ENCODE measurements at regions of chr17 and their contacts with region 1.

Region 1: GRCh38 chr17:67376737-67377487 is at the start of gene PITPNC1:
- DNase-seq: peak; percentile 80 to 81
- H3K4me3 ChIP-seq: peak within 1 kb of the TSS; percentile 74 to 90
- H3K27ac ChIP-seq: peak within 1 kb of the TSS; percentile 91 to 96
- H3K4me1 ChIP-seq: no peaks in the 10 kb centered on the region
- H3K27me3 ChIP-seq: no peaks in the 10 kb centered on the region
- CTCF ChIP-seq: peak in 2 of 4 experiments; percentile 15 to 20
- POLR2A ChIP-seq: peak; percentile 67 to 83
- total RNA-seq, gene PITPNC1: 4.1 to 45.1 (median 8.7) TPM

Region 2: DNA sequence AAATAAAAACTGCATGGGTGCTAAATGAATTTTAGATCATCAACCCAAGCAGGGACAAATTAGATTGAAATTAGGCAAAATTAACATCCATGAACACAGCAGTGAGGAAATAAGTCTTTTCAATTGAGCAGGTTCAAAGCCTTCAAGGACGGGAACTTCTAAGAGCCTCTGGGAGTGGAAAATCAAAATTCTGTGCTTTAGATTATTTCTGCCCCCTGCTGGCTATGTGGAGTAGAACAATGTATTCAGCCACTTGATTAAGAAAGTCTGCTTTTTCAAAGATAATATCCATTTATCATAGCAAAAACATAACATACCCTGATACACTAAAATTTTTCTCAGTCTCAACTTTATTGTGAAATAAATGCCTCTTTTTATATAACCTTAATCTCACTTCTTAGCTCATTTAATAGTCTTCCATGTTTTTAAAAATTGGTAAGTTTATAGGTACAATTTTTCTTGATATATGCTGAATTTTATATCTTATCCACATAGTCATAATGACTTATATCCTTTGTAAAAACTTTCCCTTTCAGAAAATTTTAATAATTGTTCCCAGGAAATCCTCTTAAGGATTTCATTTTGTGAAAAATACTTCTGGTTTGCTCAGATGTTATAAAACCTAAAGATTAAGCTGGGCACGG is 312.7 kb after region 1 on chr17:
- intact Hi-C with region 1: loop called (anchors 5 kb)
- DNase-seq: peak; percentile 18 to 54
- H3K4me3 ChIP-seq: no peak overlapping the region
- H3K27ac ChIP-seq: no peak overlapping the region
- H3K4me1 ChIP-seq: no peaks in the 10 kb centered on the region
- H3K27me3 ChIP-seq: no peaks in the 10 kb centered on the region
- CTCF ChIP-seq: peak; percentile 63 to 83 (median 78)
- POLR2A ChIP-seq: no peak